Activated B cell treated with CpG ODN at 0.5 μM for 24 hours (primary cell): ENCODE measurements at regions of chr1 and their contacts with region 1.

Region 1: DNA sequence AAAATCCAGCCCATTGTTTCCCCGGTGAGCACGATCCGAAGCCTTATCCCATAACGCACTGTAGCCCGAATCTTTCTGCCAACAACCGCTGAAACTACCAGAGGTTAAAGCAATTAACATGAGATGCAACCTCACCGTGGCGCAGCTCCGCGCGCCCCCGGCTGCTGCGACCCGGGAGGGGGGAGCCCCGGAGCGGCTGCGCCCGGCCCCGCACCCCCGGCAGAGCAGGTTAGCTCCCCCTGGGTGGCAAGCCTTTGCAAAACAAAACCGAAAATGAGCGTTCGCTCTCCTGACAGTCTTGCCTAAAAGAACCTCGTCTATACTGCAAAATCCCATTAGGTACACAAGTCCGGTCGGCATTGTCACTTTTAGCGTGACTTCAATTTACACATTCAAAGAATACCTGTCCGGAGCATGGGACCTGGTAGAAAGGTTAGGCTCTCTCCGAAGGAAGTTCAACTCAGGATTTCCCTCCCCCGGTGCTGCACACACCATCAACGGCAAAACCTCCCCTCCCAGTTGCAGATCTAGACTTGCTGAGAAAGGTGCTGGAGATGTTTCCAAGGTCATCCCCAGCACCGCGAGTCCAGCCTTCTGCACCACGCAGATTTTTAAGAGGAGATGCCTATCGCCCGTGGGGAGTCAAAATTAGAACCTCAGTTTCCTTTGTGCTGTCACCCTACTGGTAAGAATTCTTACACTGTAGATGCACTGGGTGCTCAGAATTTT is 107.5 kb downstream of the ZNF281 start:
- DNase-seq: peak; percentile 59
- ATAC-seq: peak; percentile 67
- H3K4me3 Mint-ChIP-seq: peak overlapping the region; percentile 89
- H3K27ac Mint-ChIP-seq: peak overlapping the region; percentile 82
- H3K4me1 Mint-ChIP-seq: peaks cover 51% of the 10 kb centered on the region
- H3K27me3 Mint-ChIP-seq: peaks cover 1% of the 10 kb centered on the region
- CTCF ChIP-seq: no peak

Region 2: DNA sequence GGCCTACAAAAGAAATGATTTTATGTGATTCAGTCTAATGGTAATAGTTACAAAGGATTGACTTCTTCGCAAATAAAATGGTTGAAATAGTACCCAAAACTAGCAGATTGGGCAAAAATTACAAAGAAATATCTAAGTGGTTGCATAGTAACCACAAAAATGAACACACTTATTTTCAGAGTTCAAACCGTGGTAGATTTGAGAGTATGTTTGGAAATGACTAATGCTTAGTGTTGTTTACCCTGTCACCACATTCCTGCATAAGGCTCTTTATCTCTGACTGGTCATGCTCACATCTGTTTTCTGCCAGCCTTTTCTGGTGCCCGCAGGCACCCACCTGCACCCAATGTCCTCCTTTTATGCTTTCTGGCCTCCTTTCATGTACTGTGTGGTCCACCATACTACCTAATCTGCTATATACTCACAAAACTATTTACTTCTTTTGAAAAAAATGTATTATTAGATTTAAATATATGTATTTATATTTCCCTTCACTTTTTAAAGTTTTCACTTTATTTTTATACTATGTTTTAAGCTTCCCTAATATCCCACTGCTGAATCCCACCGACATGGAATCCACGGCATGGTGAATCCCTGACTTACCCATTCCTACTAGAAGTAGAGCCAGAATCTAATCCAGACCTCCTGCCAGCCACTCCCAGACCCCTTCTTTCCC is 1633.2 kb before region 1 on chr1:
- CTCF ChIA-PET with region 1: no interaction called
- POLR2A ChIA-PET with region 1: no interaction called
- intact Hi-C with region 1: loop called (anchors 10 kb)
- DNase-seq: no peak
- ATAC-seq: peak; percentile 57
- H3K4me3 Mint-ChIP-seq: peak overlapping the region; percentile 42
- H3K27ac Mint-ChIP-seq: peak overlapping the region; percentile 88
- H3K4me1 Mint-ChIP-seq: peaks cover 89% of the 10 kb centered on the region
- H3K27me3 Mint-ChIP-seq: no peaks in the 10 kb centered on the region
- CTCF ChIP-seq: no peak

Region 3: GRCh38 chr1:199976496-199977144 is 325.7 kb before region 1 on chr1:
- CTCF ChIA-PET with region 1: no interaction called
- POLR2A ChIA-PET with region 1: interaction called, 3 read pairs
- intact Hi-C with region 1: loop called (anchors 5 kb)
- DNase-seq: no peak
- ATAC-seq: no peak
- H3K4me3 Mint-ChIP-seq: no peak overlapping the region
- H3K27ac Mint-ChIP-seq: no peak overlapping the region
- H3K4me1 Mint-ChIP-seq: peaks cover 24% of the 10 kb centered on the region
- H3K27me3 Mint-ChIP-seq: peaks cover 52% of the 10 kb centered on the region
- CTCF ChIP-seq: no peak

Region 4: GRCh38 chr1:200154069-200154767 is 148.1 kb before region 1 on chr1:
- CTCF ChIA-PET with region 1: interaction called, 3 read pairs
- POLR2A ChIA-PET with region 1: interaction called, 63 read pairs
- intact Hi-C with region 1: loop called (anchors 1 kb)
- DNase-seq: peak; percentile 23
- ATAC-seq: peak; percentile 87
- H3K4me3 Mint-ChIP-seq: peak overlapping the region; percentile 61
- H3K27ac Mint-ChIP-seq: peak overlapping the region; percentile 92
- H3K4me1 Mint-ChIP-seq: peaks cover 55% of the 10 kb centered on the region
- H3K27me3 Mint-ChIP-seq: no peaks in the 10 kb centered on the region
- CTCF ChIP-seq: no peak

Region 5: GRCh38 chr1:200279810-200280411 is 22.4 kb before region 1 on chr1:
- CTCF ChIA-PET with region 1: interaction called, 7 read pairs
- POLR2A ChIA-PET with region 1: interaction called, 3 read pairs
- intact Hi-C with region 1: loop called (anchors 1 kb)
- DNase-seq: no peak
- ATAC-seq: no peak
- H3K4me3 Mint-ChIP-seq: no peak overlapping the region
- H3K27ac Mint-ChIP-seq: no peak overlapping the region
- H3K4me1 Mint-ChIP-seq: peaks cover 12% of the 10 kb centered on the region
- H3K27me3 Mint-ChIP-seq: peaks cover 4% of the 10 kb centered on the region
- CTCF ChIP-seq: no peak

Region 6: DNA sequence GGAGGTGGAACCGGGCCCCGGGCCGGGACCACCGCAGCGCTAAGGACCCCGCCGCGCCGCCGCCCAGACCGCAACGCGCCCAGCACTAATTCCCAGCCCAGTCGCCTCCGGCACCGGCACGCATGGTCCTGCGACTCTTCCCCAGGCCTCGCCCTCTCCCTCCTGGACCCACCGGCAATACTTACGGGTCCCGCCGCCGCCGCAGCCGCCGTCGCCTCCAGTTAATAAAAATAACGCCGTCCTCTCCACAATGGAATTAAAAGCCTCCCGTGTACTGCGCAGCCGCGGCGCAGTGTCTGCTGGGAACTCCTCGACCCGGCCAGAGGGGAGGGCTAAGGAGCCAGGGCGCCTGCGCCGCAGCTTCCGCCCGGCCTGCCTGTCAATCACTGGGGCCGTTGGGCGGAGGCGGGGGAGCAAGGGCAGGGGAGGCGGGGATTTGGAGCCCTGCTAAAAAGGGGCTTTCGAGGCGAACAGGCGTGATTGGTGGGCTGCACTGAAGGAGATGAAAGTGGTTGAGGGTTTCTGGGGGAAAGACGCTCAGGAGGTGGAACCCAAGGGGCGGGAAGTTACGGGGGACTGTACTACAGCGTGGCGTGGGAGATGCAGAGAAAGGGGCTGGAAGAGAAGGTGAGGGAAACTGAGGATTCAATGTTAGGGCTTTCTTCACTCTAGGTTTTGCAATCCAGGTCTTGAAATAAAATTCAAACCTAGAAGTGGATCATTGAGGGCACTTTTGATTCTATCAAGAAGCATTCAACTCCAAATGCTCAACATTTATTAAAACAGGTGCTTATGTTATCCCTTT is 107.6 kb after region 1 on chr1 and contains the start of gene ZNF281:
- CTCF ChIA-PET with region 1: interaction called, 3 read pairs
- POLR2A ChIA-PET with region 1: interaction called, 8 read pairs
- intact Hi-C with region 1: loop called (anchors 1 kb)
- DNase-seq: peak; percentile 93
- ATAC-seq: peak; percentile 96
- H3K4me3 Mint-ChIP-seq: peak within 1 kb of the TSS; percentile 97
- H3K27ac Mint-ChIP-seq: peak within 1 kb of the TSS; percentile 95
- H3K4me1 Mint-ChIP-seq: peaks cover 51% of the 10 kb centered on the region
- H3K27me3 Mint-ChIP-seq: no peaks in the 10 kb centered on the region
- CTCF ChIP-seq: no peak
- total RNA-seq, gene ZNF281: 28.2 and 31.2 TPM in 2 replicates

Region 7: DNA sequence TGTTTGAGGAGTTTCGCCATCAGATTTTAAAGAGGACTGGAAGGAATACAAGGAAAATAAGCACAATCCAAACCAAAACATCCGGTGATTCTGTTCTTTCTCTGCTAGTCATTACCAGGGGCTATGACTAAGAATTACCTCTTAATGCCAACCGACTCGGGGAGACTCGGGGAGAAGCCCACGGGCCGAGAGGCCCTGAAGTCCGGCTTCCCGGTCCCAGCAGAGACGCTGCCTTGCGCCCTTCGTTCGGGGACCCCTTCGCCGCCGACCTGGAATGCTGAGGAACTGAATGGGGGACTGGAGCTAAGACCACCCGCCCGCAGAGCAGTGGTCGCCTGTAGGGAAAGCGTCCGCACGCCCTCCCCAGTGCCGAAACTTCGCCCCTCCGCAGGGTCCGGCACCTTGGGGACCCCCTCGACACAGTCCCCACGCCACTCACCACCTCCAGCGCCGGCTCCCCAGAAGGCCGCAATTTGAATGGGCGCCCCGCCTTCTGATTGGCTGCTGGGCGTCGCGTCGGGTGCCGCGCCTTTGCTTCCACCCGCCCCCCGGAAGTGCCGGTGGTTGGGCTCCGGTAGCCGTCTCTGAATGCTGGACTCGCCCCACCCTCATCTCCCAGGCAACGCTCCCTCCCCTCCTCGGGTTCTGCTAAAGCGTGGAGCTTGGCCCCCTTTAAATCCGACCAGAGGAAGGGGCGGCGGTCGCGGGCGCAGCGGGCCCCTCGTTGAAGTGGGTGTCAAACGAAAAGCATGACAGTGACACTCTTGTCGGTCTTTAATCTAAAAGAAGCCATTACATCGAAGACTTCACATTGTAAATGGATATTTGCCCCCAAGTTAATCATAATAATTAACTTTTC is 318.1 kb after region 1 on chr1 and contains the start of gene KIF14:
- CTCF ChIA-PET with region 1: no interaction called
- POLR2A ChIA-PET with region 1: no interaction called
- intact Hi-C with region 1: loop called (anchors 10 kb)
- DNase-seq: peak; percentile 85
- ATAC-seq: peak; percentile 99
- H3K4me3 Mint-ChIP-seq: peak within 1 kb of the TSS; percentile 94
- H3K27ac Mint-ChIP-seq: peak within 1 kb of the TSS; percentile 88
- H3K4me1 Mint-ChIP-seq: peaks cover 11% of the 10 kb centered on the region
- H3K27me3 Mint-ChIP-seq: no peaks in the 10 kb centered on the region
- CTCF ChIP-seq: no peak
- total RNA-seq, gene KIF14: 0.27 and 0.38 TPM in 2 replicates